Motor neuron (in vitro differentiated cells): ENCODE measurements at regions of chr1 and their contacts with region 1.

Region 1: DNA sequence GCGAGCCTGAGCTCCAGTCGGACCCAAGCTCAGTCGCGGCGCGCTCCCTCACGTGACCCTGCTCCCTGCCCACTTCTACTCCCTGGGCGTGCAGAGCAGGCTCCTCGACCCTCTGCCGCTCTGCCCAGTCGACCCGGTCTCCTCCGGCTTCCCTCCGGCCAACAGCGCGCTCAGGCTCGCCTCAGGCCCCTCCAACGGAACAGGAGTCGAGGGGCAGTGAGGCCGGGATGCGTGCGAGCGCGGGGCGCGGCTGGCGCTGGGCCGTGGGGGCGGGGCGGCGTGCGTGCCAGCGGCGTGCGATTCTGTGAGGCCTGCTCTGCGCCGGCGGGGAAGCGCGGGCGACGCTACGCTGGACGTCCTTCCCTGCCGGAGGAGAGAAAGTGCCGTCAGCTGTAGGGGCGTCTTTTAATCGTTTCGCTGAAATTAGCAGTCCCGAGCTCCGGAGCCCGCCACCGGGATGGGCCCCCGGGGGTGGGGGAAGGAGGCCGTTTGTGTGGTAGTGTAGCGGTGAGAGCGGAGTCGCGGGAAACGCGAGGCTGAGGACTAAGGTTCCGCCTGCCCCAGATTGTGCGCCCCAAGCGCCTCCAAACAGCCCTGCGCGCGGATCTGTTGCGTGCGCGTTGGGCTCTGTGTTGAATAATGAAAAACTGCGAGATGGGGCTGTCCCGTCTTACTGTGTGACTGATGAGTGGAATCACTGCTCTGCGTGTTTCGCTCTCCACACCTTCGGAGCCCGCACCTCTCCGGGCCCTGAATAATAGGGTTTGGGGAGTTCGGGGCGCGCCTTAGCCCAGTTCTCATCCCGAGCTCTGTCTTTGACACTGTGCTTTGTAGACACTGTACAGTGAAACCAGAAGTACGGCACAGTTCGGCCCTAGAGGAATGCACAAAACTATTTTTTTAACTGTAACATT is at the start of gene ACBD6:
- ATAC-seq: peak; percentile 86 to 90 (median 89)
- H3K4me3 ChIP-seq: peak within 1 kb of the TSS; percentile 71 to 84 (median 75)
- H3K27ac ChIP-seq: peak within 1 kb of the TSS; percentile 95 to 96
- H3K4me1 ChIP-seq: peaks cover 8 to 28% of the 10 kb centered on the region in 2 donors
- total RNA-seq, gene ACBD6: 62.2 to 113 (median 89.6) TPM

Region 2: DNA sequence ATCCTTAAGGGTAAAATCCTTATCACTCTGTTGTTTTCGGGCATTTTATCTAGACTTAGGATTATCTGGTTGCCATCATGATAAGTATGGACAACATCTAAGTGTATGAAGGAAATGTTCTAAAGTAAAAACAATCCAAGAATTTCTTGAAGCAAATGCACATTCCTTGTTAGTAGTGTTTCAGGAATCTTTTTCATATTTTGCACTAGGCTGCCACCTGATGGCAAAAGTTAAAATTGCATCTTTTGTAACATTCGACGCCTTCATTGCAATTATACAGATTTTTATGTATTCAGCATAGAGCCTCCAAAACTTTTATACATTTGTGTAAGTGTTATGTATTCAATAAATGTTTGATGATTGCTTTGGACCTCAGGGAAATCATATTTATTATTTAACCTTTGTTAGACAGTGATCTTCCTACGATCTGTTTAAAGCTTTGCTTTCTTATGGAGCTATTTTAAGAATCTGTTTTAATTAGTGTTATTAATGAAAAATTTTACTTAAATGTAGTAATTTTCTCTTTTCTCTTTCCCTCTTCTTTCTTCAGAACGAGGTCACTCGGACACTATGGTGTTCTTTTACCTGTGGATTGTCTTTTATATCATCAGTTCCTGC is 360.6 kb after region 1 on chr1:
- in situ Hi-C with region 1: loop called in 5 of 9 experiments (anchors 25 kb)
- ATAC-seq: peak in 3 of 8 experiments; percentile 19 to 32 (median 26)
- H3K4me3 ChIP-seq: no peak overlapping the region
- H3K27ac ChIP-seq: no peak overlapping the region
- H3K4me1 ChIP-seq: peaks cover 0 to 4% of the 10 kb centered on the region in 2 donors

Region 3: GRCh38 chr1:180881806-180882509 is 379.3 kb after region 1 on chr1:
- in situ Hi-C with region 1: loop called in 1 of 9 experiments (anchors 25 kb)
- ATAC-seq: peak; percentile 76 to 91 (median 84)
- H3K4me3 ChIP-seq: no peak overlapping the region
- H3K27ac ChIP-seq: no peak overlapping the region
- H3K4me1 ChIP-seq: no peaks in the 10 kb centered on the region

Region 4: GRCh38 chr1:181166377-181167196 is 664.0 kb after region 1 on chr1:
- in situ Hi-C with region 1: loop called in 8 of 9 experiments (anchors 25 kb)
- ATAC-seq: peak; percentile 94 to 100 (median 99)
- H3K4me3 ChIP-seq: no peak overlapping the region
- H3K27ac ChIP-seq: no peak overlapping the region
- H3K4me1 ChIP-seq: peaks cover 3 to 5% of the 10 kb centered on the region in 2 donors

Region 5: DNA sequence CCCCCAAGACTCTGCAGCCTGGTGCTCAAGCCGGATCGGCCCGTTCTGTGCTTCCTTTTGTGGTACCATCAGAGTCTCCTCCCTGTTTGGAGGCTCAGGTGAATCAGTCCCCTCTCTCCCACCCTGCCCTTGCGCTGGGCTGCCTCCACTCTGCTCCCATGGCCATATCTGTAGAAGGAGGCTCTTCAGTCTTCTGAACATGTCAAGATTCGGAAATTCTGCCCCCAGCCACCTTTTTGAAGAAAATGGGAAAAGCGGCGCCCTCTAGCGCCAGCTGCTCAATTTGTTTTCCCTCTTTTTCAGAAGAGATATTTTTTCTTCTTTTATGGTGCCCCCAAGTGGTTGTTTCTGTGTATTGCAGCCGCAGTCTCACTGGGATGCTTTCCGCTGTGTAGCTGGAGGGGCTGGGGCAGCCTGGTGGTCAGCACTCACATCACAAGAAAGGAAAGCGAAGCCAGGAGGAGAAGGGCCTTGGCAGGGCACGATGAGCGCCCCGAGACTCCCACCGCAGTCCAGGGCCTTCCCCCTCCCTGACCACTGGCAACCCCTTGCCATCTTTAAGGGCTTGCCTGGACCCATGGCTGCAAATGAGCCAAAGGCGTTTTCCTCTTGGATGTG is 922.3 kb after region 1 on chr1:
- in situ Hi-C with region 1: loop called in 1 of 9 experiments (anchors 25 kb)
- ATAC-seq: peak; percentile 52 to 88 (median 66)
- H3K4me3 ChIP-seq: no peak overlapping the region
- H3K27ac ChIP-seq: no peak overlapping the region
- H3K4me1 ChIP-seq: no peaks in the 10 kb centered on the region